B cell (primary cell): ENCODE measurements at regions of chr7 and their contacts with region 1.

Region 1: GRCh38 chr7:44082541-44083207 is 344 bp upstream of the POLM start:
- DNase-seq: no peak
- ATAC-seq: peak; percentile 91
- H3K4me3 ChIP-seq: peak overlapping the region; percentile 26 to 77 (median 66)
- H3K4me3 Mint-ChIP-seq: peak overlapping the region; percentile 84
- H3K27ac ChIP-seq: peak overlapping the region; percentile 77 to 92
- H3K27ac Mint-ChIP-seq: peak overlapping the region; percentile 93
- H3K4me1 ChIP-seq: peaks cover 38 to 43% of the 10 kb centered on the region in 2 donors
- H3K4me1 Mint-ChIP-seq: peaks cover 45% of the 10 kb centered on the region
- H3K27me3 ChIP-seq: no peaks in the 10 kb centered on the region
- H3K27me3 Mint-ChIP-seq: no peaks in the 10 kb centered on the region
- CTCF ChIP-seq: peak; percentile 34

Region 2: DNA sequence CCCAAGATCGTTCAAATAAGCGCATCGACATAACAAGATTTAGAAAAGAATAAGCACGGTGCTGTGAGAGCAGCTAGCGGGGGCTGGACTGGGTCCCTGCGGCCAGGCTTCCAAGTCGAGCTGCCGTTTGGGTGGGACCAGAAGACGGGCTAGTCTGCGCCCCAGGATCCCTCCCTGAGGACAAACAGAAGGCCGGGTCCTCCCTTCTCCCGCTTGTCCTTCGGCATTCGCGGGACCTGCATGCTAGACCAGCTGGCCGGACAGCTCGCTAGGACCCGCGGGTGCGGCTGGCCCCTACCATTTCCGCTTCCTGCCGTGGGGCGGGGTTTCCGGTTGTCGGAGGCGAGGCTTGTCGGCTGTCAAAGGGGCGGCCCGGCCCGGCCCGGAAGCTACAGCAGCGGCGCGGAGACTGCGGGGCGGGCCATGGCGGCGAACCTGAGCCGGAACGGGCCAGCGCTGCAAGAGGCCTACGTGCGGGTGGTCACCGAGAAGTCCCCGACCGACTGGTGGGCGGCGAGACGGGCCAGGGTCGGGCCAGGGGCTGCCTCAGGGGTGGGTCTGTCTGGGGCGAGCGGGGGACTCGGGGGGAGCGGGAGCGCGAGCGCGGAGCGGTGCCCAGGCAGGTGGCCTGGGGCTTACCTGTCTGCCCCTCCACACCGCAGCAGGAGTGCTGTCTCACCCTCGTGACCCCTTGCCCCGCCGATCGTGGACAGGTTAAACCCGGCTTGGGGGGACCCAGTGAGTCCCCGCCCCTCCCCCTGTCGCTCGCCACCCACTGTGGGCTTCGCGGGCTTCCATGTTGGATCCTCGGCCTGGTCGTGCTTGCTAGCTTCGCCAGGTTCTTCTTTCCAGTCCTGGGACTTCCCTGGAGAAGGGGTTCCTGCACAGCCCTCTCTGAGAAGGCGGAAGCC is 38.1 kb before region 1 on chr7 and contains the start of gene DBNL:
- CTCF ChIA-PET with region 1: interaction called, 11 read pairs
- POLR2A ChIA-PET with region 1: interaction called, 15 read pairs
- intact Hi-C with region 1: loop called (anchors 1 kb)
- DNase-seq: peak; percentile 89
- ATAC-seq: peak; percentile 42
- H3K4me3 ChIP-seq: peak within 1 kb of the TSS; percentile 86 to 96 (median 91)
- H3K4me3 Mint-ChIP-seq: peak within 1 kb of the TSS; percentile 98
- H3K27ac ChIP-seq: peak within 1 kb of the TSS; percentile 83 to 96
- H3K27ac Mint-ChIP-seq: peak within 1 kb of the TSS; percentile 99
- H3K4me1 ChIP-seq: peaks cover 51 to 60% of the 10 kb centered on the region in 2 donors
- H3K4me1 Mint-ChIP-seq: peaks cover 58% of the 10 kb centered on the region
- H3K27me3 ChIP-seq: no peaks in the 10 kb centered on the region
- H3K27me3 Mint-ChIP-seq: no peaks in the 10 kb centered on the region
- CTCF ChIP-seq: no peak
- total RNA-seq, gene DBNL: 311 and 335 TPM in 2 replicates

Region 3: DNA sequence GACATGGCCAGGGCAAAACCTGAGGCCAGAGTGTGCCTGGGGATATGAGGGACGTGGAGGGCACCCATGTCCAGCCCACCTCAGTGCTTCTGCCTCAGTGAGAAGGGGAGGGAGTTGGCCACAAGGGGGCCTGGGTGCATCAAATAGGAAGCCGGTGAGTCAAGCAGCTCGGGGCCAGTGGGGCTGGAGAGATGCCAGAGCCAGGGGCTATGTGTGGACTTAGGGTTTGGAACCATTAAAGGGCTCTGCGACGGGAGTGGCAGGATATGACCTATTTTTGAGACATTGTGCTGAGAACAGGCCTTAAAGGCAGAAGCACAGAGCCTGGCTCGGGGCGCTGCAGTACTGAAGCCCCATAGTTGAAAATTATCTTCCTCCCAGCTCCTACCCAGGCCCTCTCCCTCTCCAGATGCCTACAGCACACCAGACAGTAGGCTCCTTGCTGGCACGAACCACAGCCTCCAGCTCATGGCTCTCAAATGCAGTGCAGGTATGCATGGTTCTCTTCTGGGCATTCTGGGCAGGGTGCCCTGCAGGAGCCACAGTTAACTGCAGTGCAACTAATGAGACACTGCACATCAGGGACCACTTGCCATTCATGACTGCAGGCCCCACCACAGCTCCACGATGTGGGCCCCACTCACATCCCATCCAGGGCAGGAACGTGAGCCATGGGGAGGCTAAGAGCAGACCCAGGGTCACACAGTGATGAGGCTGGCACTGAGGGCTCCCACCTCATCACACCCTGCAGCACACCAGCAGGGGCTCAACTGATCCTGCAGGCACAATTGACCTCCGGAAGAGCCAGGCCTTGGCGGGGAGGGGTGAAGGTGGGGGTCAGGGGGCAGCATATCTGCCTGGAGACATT is 10.1 kb before region 1 on chr7:
- CTCF ChIA-PET with region 1: interaction called, 7 read pairs
- POLR2A ChIA-PET with region 1: interaction called, 4 read pairs
- intact Hi-C with region 1: loop called (anchors 1 kb)
- DNase-seq: peak; percentile 57
- ATAC-seq: no peak
- H3K4me3 ChIP-seq: no peak overlapping the region
- H3K4me3 Mint-ChIP-seq: peak overlapping the region; percentile 12
- H3K27ac ChIP-seq: peak overlapping the region; percentile 90 to 98
- H3K27ac Mint-ChIP-seq: peak overlapping the region; percentile 89
- H3K4me1 ChIP-seq: peaks cover 44 to 67% of the 10 kb centered on the region in 2 donors
- H3K4me1 Mint-ChIP-seq: peaks cover 74% of the 10 kb centered on the region
- H3K27me3 ChIP-seq: no peaks in the 10 kb centered on the region
- H3K27me3 Mint-ChIP-seq: no peaks in the 10 kb centered on the region
- CTCF ChIP-seq: peak; percentile 61

Region 4: DNA sequence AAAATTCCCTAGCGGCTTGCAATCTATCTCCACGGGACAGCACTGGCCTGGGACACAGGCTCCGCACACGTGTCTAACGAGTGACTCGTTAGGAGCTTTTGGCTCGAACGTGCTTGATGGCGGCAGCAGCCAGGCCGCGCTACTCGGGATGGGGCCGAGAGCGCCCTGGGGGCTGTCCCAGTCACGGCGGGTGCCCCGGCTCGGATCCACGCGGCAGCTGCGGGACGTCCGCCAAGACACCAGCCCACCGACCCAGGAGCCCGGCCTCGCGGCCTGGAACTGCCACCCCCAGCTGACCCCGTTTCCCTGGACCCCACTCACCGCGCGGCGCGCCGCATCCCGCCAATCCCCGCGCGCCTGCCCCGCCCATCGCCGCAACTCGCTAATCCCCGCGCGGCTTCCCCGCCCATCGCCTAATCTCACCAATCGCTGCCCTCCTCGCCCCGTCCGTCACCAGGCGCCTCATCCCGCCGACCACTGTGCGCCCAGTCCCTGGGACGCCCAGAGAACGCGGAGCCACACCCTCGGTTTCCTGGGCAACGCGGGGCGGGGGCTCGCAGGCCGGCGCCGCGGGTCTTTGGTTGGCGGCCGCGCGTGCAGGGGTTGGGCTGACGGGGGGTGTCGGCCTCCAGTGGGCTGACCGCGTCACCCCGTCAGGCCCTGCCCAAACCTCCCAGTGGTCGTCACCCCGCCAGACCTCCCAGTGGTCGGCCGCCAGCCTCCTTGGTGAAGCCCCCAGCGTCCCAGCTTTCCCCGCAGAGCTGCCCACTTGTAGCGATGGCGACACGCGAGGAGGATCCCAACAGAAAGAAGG is 40.7 kb after region 1 on chr7 and contains the start of gene POLD2:
- CTCF ChIA-PET with region 1: interaction called, 3 read pairs
- POLR2A ChIA-PET with region 1: interaction called, 4 read pairs
- intact Hi-C with region 1: loop called (anchors 1 kb)
- DNase-seq: peak; percentile 97
- ATAC-seq: peak; percentile 98
- H3K4me3 ChIP-seq: peak within 1 kb of the TSS; percentile 67 to 78 (median 76)
- H3K4me3 Mint-ChIP-seq: peak within 1 kb of the TSS; percentile 97
- H3K27ac ChIP-seq: peak within 1 kb of the TSS; percentile 59 to 80
- H3K27ac Mint-ChIP-seq: peak within 1 kb of the TSS; percentile 93
- H3K4me1 ChIP-seq: peaks cover 9 to 19% of the 10 kb centered on the region in 2 donors
- H3K4me1 Mint-ChIP-seq: peaks cover 22% of the 10 kb centered on the region
- H3K27me3 ChIP-seq: no peaks in the 10 kb centered on the region
- H3K27me3 Mint-ChIP-seq: no peaks in the 10 kb centered on the region
- CTCF ChIP-seq: no peak
- total RNA-seq, gene POLD2: 86.7 and 91.0 TPM in 2 replicates

Region 5: DNA sequence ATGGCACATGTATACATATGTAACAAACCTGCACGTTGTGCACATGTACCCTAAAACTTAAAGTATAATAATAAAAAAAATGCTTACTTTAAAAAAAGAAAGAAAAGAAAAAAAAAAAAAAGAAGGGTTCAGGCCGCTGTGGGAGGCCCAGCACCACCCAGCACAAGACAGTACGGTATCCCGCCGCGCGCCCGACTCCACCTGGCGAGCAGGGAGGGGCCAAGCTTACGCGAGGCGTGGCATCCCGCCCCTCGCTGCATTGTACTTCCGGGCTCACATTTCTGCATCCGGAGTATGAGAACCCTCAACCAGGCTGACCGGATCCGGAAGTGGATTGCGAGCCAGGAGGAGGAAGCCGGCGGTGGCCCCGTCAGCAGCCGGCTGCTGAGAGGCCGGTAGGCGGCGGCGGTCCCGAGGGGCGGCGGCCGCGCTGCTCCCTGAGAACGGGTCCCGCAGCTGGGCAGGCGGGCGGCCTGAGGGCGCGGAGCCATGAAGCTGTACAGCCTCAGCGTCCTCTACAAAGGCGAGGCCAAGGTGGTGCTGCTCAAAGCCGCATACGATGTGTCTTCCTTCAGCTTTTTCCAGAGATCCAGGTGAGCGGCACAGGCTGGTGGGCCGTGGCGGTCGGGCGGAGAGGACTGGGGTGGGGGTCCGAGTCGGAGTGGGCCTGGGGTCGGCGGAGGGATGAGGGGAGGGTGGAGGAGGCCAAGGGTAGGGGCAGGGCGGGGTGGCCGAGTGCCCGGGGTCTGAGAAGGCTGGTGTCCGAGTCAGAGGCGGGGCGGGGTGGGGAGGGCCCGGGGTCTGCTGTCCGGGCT is 118.2 kb after region 1 on chr7 and contains the start of gene YKT6:
- CTCF ChIA-PET with region 1: no interaction called
- POLR2A ChIA-PET with region 1: interaction called, 6 read pairs
- intact Hi-C with region 1: loop called (anchors 1 kb)
- DNase-seq: peak; percentile 96
- ATAC-seq: peak; percentile 97
- H3K4me3 ChIP-seq: peak within 1 kb of the TSS; percentile 41 to 81 (median 70)
- H3K4me3 Mint-ChIP-seq: peak within 1 kb of the TSS; percentile 88
- H3K27ac ChIP-seq: peak within 1 kb of the TSS; percentile 47 to 77
- H3K27ac Mint-ChIP-seq: peak within 1 kb of the TSS; percentile 74
- H3K4me1 ChIP-seq: peaks cover 7 to 11% of the 10 kb centered on the region in 2 donors
- H3K4me1 Mint-ChIP-seq: peaks cover 23% of the 10 kb centered on the region
- H3K27me3 ChIP-seq: no peaks in the 10 kb centered on the region
- H3K27me3 Mint-ChIP-seq: peaks cover 11% of the 10 kb centered on the region
- CTCF ChIP-seq: peak; percentile 56
- total RNA-seq, gene YKT6: 62.3 and 73.4 TPM in 2 replicates